ENCODE measurements at regions of chr17 and their contacts with region 1.

Region 1: DNA sequence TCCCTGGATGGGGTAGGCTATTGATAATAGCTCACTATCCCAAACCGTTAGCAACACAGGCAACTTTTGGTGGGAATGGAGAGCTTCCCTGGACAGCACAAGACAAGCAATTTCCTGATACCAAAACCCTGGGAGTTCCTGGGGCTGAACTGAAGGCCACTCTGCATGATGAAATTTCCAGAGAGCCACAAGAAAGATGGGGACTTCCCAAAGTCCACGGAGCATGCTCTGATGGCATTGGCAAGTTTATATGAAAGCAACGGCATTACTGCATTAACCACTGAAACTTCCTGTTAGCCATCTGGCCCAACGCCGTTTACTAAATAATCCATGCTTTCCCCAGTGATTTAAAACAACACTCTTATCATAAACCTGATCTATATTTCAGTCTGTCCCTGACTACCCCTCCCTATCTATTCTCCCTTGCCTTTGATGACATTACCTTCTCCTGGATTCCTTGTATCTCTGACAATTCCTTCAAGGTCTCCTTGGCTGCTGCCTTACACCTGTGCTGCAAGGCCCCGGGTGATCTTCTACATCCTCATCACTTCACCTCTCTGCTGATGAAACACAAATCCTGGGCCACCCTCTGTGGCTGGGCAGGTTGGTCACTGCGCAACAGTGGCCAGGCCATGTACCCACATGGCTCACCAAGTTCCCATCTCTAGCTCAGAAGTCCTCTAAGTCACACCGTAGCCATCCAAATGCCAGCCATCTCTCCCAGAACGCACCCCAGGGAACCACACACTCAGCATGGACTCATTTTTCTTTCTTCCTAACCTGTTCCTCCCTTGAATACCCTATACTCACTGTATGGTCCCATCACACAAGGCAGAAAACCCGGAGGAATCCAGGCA is 108.5 kb upstream of the RCVRN start:
- DNase-seq: no peak
- H3K4me3 ChIP-seq: no peak overlapping the region
- H3K4me1 ChIP-seq: no peaks in the 10 kb centered on the region
- H3K27me3 ChIP-seq: no peaks in the 10 kb centered on the region

Region 2: GRCh38 chr17:9924735-9925191 is 88.8 kb before region 1 on chr17:
- in situ Hi-C with region 1: loop called (anchors 25 kb)
- DNase-seq: peak; percentile 13 to 73
- H3K4me3 ChIP-seq: no peak overlapping the region
- H3K4me1 ChIP-seq: no peaks in the 10 kb centered on the region
- H3K27me3 ChIP-seq: no peaks in the 10 kb centered on the region

Region 3: DNA sequence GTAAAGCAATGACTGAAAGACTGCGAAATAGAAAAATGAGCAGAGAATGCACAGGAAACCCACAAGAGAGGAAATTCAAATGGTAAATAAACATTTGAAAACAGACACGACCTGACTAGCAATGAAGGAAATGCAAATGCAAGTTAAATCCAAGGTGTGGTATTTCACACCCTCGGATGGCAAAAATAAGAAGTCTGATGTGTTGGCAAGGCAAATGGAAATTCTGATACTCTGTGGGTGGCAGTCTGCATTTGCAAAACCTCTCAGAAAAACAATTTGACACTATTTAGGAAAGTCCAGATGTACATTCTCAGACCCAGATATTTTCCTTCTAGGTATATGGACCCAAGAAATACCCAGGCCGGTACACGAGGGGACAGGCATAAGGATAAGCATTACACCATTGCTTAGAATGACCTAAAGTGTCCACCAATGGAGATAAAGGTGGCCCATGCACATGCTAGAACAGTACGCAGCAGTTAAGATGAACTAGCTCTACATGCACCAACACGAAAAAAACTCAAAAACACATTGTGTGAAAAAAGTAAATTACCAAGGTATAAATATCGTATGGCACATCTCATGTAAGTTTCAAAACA is 68.1 kb after region 1 on chr17:
- in situ Hi-C with region 1: no loop called
- DNase-seq: no peak
- H3K4me3 ChIP-seq: no peak overlapping the region
- H3K4me1 ChIP-seq: no peaks in the 10 kb centered on the region
- H3K27me3 ChIP-seq: no peaks in the 10 kb centered on the region

Measured in HAP-1 (cell line).